HEK293 (cell line): ENCODE measurements at regions of chr6 and their contacts with region 1.

Region 1: GRCh38 chr6:132300323-132300949 is 100.8 kb downstream of the MOXD1 start:
- H3K4me3 ChIP-seq: no peak overlapping the region
- H3K27ac ChIP-seq: no peak overlapping the region
- H3K4me1 ChIP-seq: no peaks in the 10 kb centered on the region
- CTCF ChIP-seq: no peak

Region 2: DNA sequence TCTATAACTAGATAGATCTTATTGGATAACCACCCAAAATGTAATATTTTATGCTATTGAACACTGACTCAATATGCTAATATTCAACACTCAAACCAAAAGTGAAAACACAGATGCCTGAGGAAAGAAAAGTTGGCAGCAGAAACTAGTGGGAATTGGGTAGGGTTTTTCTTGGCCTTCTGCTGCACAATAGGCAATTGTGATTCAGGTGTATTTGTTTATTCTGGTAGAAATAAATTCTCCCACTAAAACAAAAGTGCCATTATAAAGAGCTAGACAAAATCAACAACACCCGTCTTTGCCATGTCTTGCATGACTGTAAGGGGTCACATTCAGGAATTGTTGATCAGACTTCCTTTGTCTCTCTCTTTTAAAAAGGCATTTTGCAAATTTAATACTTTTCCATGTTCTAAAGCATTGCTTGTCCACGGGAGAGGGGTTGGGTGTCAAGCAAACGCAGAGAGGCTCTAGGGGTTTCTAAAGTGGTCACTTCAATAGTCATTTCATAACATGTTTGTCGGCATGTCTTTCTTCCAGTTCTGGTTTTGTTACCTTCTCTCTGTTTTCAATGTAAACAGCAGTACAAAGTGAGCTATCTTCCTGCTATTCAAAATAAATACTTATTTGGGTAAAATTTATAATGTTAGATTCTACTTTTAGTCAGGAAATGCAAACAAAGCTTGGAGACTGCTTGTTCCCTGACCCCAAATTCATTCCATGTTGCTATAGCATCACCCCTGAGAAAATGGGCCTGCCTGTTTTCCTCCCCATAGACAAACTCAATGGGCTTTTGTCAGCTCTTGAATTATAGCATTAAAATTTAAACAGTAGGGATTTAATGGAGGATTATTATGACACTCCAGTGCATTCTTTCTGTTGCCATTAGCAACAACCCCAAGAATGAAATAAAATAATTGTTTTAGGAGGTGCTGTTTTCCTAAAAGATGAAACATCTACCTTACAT is 132.2 kb before region 1 on chr6:
- CTCF ChIA-PET with region 1: no interaction called
- POLR2A ChIA-PET with region 1: no interaction called
- H3K4me3 ChIP-seq: no peak overlapping the region
- H3K27ac ChIP-seq: no peak overlapping the region
- H3K4me1 ChIP-seq: no peaks in the 10 kb centered on the region
- CTCF ChIP-seq: no peak

Region 3: GRCh38 chr6:132270726-132271402 is 29.6 kb before region 1 on chr6:
- CTCF ChIA-PET with region 1: interaction called, 629 read pairs
- POLR2A ChIA-PET with region 1: no interaction called
- H3K4me3 ChIP-seq: no peak overlapping the region
- H3K27ac ChIP-seq: no peak overlapping the region
- H3K4me1 ChIP-seq: no peaks in the 10 kb centered on the region
- CTCF ChIP-seq: no peak

Region 4: GRCh38 chr6:132382630-132383175 is 82.3 kb after region 1 on chr6:
- CTCF ChIA-PET with region 1: interaction called, 13 read pairs
- POLR2A ChIA-PET with region 1: no interaction called
- H3K4me3 ChIP-seq: no peak overlapping the region
- H3K27ac ChIP-seq: no peak overlapping the region
- H3K4me1 ChIP-seq: no peaks in the 10 kb centered on the region
- CTCF ChIP-seq: no peak

Region 5: GRCh38 chr6:132456700-132457143 is 156.3 kb after region 1 on chr6:
- CTCF ChIA-PET with region 1: interaction called, 13 read pairs
- POLR2A ChIA-PET with region 1: no interaction called
- H3K4me3 ChIP-seq: no peak overlapping the region
- H3K27ac ChIP-seq: no peak overlapping the region
- H3K4me1 ChIP-seq: no peaks in the 10 kb centered on the region
- CTCF ChIP-seq: no peak

Region 6: DNA sequence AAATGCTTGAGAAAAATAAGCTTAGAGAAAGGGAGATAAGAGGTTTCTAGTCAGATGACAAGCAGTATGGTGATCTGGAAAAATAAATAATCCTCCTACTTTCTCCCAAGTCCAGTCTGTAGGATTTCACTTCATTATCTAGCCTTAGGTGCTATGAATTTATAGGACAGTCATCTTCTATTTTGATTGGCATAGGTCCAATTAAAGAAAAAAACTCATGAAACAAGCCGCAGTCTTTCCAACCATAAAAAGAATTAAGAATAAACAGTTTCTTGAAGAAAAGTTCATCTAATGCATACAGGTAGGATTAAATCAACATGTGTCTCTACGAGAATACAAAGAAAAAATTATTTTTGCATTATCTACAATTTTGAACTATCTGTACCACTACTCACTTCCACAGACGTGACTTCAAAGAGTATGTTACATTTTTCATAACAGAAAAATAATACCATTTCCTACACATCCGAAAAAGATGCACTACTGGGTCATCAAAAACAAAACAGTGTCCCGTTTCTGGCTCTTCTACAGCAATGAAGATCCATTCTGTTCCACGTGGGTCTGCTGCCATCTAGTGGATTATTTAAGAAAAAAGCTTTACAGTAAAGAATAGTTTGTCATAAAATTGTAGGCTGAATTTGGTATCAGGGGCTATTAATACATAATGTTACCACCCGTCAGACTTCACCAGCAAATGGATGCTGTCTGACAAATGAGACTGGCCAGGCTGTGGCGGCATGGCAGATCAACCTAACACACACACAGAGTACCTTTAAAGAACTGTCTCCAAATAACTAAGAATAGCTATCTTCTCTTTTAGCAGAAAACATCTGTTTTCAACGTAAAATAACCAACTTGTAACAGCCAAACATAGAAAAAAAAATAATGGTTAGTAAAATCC is 183.6 kb after region 1 on chr6:
- CTCF ChIA-PET with region 1: interaction called, 203 read pairs
- POLR2A ChIA-PET with region 1: no interaction called
- H3K4me3 ChIP-seq: no peak overlapping the region
- H3K27ac ChIP-seq: no peak overlapping the region
- H3K4me1 ChIP-seq: peaks cover 5% of the 10 kb centered on the region
- CTCF ChIP-seq: peak; percentile 53